ENCODE measurements at regions of chr10 and their contacts with region 1.

Region 1: DNA sequence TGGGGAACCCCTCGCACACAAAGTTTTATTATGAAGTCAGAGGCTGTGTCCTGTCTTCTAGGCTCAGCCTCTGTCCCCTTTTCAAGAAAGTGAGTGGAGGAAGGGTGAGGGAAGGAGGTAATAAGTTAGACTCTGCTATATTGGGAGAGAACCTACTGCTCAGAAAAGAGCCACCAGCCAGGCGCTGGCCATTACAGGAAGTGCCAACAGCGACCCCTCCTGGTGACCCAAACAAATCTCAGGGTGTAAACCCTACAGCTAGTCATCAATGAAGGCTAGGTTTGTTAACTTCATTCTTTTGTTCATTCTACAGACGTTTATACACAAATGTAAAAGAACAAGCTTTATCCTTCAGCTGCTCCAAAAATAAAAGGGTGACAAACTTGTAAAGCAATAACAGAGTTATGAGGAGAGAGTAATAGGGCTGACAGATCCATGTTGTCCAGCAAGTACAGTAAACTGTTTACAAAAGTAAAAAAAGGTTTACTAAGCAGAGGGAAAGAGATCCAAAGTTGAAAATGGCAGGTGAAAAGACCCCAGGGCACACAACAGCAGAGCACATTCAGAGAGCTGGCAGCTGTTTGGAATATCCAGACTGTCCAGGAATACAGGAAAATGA is 82.7 kb downstream of the FAM204A start:
- DNase-seq: peak; percentile 84

Region 2: GRCh38 chr10:117496616-117497028 is 762.8 kb before region 1 on chr10:
- CTCF ChIA-PET with region 1: interaction called, 10 read pairs
- POLR2A ChIA-PET with region 1: no interaction called
- DNase-seq: peak; percentile 89

Region 3: DNA sequence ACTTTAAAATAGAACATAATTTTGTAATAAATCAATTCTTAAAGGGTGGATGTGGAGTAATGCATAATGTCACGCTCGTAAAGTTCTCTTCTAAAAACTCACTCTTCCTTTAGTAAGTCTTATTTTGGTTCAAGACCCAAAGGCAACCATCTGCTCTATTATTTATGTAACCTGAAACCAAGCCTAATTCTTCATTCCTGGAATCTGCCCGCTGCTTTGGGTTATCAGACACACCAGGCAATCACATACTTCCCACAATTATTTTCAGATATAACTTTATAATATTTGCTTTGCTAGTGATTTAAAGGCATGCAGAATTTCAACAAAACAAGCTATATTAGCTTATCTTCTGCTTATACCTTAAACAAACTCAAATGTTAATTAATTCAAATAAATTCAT is 251.6 kb before region 1 on chr10:
- CTCF ChIA-PET with region 1: interaction called, 10 read pairs
- POLR2A ChIA-PET with region 1: no interaction called
- DNase-seq: no peak

Measured in HEK293T (cell line).